ENCODE measurements at regions of chr2 and their contacts with region 1.

Region 1: DNA sequence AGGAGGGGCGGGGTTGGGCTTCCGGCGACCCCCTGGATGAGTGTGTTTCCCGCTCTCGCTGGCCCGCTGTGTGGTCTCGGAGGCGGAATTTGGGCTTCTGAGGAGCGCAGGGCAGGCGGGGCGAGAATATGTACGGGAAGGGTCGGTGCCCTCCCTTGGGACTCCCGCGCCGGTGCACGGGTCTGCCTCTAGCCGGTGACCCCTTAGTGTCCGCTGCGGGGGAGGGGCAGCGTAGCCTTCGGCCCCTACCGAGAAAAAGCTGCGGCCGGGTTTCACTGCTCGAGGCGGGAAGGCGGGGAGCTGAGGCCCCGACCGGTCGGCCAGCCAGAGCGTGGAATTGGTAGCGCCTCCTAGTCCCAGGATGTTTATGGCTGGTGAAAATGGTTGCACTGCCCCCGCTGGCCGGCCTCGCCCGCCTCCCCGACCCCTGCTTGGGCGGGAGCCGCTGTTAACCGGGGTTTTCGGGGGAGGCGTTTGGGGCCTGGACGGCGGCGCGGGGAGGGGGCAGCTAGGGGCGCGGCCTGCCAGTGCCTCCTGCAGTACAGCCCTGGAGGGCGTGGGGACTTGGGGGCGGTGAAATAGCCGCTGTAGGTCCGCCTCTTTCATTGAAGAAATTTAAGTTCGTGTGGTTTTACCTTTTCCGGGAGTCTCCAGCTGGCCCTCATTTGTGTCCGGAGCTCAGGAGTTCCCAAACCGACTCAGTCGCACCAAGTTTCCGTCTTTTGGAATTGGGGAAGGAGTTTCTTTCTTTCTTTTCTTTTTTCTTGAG is at the start of gene UGP2:
- DNase-seq: peak; percentile 70 to 92 (median 82)
- ATAC-seq: peak; percentile 64
- H3K4me3 ChIP-seq: peak within 1 kb of the TSS; percentile 99
- H3K4me3 Mint-ChIP-seq: peak within 1 kb of the TSS; percentile 99
- H3K27ac ChIP-seq: peak within 1 kb of the TSS; percentile 87
- H3K27ac Mint-ChIP-seq: peak within 1 kb of the TSS; percentile 97
- H3K4me1 ChIP-seq: peaks cover 29% of the 10 kb centered on the region
- H3K4me1 Mint-ChIP-seq: peaks cover 47% of the 10 kb centered on the region
- H3K27me3 ChIP-seq: no peaks in the 10 kb centered on the region
- H3K27me3 Mint-ChIP-seq: no peaks in the 10 kb centered on the region
- CTCF ChIP-seq: peak; percentile 15
- total RNA-seq, gene UGP2: 47.1 to 53.2 TPM

Region 2: GRCh38 chr2:63698825-63699548 is 142.5 kb before region 1 on chr2:
- CTCF ChIA-PET with region 1: no interaction called
- POLR2A ChIA-PET with region 1: no interaction called
- intact Hi-C with region 1: loop called in 1 of 2 experiments (anchors 1 kb)
- DNase-seq: peak in 6 of 14 experiments; percentile 4 to 61 (median 29)
- ATAC-seq: peak; percentile 70
- H3K4me3 ChIP-seq: no peak overlapping the region
- H3K4me3 Mint-ChIP-seq: no peak overlapping the region
- H3K27ac ChIP-seq: no peak overlapping the region
- H3K27ac Mint-ChIP-seq: no peak overlapping the region
- H3K4me1 ChIP-seq: no peaks in the 10 kb centered on the region
- H3K4me1 Mint-ChIP-seq: no peaks in the 10 kb centered on the region
- H3K27me3 ChIP-seq: no peaks in the 10 kb centered on the region
- H3K27me3 Mint-ChIP-seq: no peaks in the 10 kb centered on the region
- CTCF ChIP-seq: peak; percentile 44

Region 3: DNA sequence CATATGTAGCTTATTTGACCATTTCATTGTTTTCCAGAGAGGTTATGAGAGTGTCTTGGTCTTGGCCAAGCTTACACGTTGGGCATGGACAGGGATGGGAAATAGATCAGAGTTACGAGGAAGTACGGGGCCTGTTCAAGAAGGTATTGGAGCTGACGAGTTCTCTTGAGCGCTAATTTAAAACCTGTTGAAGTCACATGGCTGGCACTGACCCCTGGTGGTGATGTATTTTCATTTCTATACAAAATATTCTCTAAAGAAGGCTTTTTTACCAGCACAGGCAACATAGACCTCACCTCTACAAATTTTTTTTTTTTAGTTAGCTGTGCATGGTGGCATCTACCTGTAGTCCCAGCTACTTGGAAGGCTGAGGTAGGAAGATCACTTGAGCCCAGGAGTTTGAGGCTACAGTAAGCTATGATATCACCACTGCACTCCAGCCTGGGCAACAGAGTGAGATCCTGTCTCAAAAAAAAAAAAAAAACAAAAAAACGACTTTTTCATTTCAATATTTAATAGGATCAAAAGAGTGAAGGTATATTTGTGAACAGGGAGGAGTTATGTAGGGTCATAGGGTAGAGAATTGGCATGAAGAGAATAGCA is 19.9 kb after region 1 on chr2:
- CTCF ChIA-PET with region 1: interaction called, 50 read pairs
- POLR2A ChIA-PET with region 1: interaction called, 93 read pairs
- intact Hi-C with region 1: loop called (anchors 1 to 2 kb)
- DNase-seq: peak; percentile 43 to 86 (median 56)
- ATAC-seq: peak; percentile 68
- H3K4me3 ChIP-seq: no peak overlapping the region
- H3K4me3 Mint-ChIP-seq: peak overlapping the region; percentile 17
- H3K27ac ChIP-seq: no peak overlapping the region
- H3K27ac Mint-ChIP-seq: peak overlapping the region; percentile 24
- H3K4me1 ChIP-seq: peaks cover 11% of the 10 kb centered on the region
- H3K4me1 Mint-ChIP-seq: peaks cover 39% of the 10 kb centered on the region
- H3K27me3 ChIP-seq: no peaks in the 10 kb centered on the region
- H3K27me3 Mint-ChIP-seq: no peaks in the 10 kb centered on the region
- CTCF ChIP-seq: peak; percentile 70

Region 4: DNA sequence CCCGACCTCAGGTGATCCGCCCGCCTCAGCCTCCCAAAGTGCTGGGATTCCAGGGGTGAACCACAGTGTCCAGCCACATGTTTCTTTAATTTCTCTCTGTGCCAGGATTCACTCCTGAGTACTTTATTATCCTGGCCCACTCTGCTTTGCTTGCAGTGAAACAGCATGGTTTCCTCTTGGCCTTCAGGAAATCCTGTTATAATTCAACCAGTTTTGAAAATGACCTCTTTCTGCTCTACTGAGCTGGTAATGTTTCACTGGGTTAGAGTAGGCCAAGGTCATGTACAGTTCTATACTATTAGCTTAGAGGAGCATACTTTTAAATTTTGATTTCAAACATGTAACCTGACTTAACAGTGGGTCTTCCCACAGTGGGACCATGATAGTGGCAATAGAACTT is 393.3 kb after region 1 on chr2:
- CTCF ChIA-PET with region 1: no interaction called
- POLR2A ChIA-PET with region 1: no interaction called
- intact Hi-C with region 1: no loop called
- DNase-seq: no peak
- ATAC-seq: no peak
- H3K4me3 ChIP-seq: no peak overlapping the region
- H3K4me3 Mint-ChIP-seq: no peak overlapping the region
- H3K27ac ChIP-seq: no peak overlapping the region
- H3K27ac Mint-ChIP-seq: no peak overlapping the region
- H3K4me1 ChIP-seq: no peaks in the 10 kb centered on the region
- H3K4me1 Mint-ChIP-seq: no peaks in the 10 kb centered on the region
- H3K27me3 ChIP-seq: no peaks in the 10 kb centered on the region
- H3K27me3 Mint-ChIP-seq: no peaks in the 10 kb centered on the region
- CTCF ChIP-seq: no peak

Region 5: DNA sequence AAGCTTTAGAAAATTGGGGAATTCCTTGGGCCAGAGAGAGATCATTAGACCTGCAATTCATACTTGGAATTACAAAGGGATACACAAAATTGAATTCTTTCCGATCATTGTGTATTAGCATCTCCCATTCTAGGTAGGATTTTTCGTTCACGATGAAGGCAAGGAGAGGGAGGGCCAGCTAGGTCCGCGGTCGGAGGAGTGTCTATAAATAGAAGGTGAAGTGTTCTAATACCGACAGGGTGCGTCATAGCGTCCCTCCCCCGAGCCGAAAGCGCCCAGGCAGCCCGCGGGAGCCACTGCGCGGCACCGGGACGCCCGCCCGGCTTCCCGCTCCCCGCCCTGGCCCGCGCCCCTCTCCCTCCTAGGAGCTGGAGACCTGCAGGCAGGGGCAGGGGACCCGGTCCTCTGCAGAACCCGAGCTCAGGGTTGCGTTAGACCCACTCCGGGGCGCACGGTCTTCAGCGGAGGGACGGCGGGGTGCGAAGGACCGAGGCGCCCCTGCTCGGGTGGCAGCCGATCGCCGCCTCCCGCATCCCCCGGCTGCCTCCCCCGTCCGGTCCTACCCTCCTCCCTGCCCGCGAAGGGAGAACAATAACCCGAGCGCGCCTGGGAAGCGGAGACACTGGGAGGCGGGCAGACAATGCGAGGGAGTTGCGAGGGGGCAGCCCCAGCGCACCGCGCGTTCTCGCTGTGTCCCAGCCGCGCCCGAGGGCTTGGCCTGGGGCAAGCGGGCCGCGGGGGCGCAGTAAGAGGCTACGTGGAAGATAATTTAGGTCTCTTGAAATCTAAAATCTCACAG is 926.4 kb after region 1 on chr2:
- CTCF ChIA-PET with region 1: no interaction called
- POLR2A ChIA-PET with region 1: no interaction called
- intact Hi-C with region 1: loop called in 1 of 2 experiments (anchors 5 kb)
- DNase-seq: peak; percentile 36 to 93 (median 62)
- ATAC-seq: peak; percentile 74
- H3K4me3 ChIP-seq: peak overlapping the region; percentile 63
- H3K4me3 Mint-ChIP-seq: peak overlapping the region; percentile 93
- H3K27ac ChIP-seq: peak overlapping the region; percentile 82 to 85
- H3K27ac Mint-ChIP-seq: peak overlapping the region; percentile 81
- H3K4me1 ChIP-seq: peaks cover 6% of the 10 kb centered on the region
- H3K4me1 Mint-ChIP-seq: peaks cover 22% of the 10 kb centered on the region
- H3K27me3 ChIP-seq: no peaks in the 10 kb centered on the region
- H3K27me3 Mint-ChIP-seq: no peaks in the 10 kb centered on the region
- CTCF ChIP-seq: peak; percentile 37

Region 6: DNA sequence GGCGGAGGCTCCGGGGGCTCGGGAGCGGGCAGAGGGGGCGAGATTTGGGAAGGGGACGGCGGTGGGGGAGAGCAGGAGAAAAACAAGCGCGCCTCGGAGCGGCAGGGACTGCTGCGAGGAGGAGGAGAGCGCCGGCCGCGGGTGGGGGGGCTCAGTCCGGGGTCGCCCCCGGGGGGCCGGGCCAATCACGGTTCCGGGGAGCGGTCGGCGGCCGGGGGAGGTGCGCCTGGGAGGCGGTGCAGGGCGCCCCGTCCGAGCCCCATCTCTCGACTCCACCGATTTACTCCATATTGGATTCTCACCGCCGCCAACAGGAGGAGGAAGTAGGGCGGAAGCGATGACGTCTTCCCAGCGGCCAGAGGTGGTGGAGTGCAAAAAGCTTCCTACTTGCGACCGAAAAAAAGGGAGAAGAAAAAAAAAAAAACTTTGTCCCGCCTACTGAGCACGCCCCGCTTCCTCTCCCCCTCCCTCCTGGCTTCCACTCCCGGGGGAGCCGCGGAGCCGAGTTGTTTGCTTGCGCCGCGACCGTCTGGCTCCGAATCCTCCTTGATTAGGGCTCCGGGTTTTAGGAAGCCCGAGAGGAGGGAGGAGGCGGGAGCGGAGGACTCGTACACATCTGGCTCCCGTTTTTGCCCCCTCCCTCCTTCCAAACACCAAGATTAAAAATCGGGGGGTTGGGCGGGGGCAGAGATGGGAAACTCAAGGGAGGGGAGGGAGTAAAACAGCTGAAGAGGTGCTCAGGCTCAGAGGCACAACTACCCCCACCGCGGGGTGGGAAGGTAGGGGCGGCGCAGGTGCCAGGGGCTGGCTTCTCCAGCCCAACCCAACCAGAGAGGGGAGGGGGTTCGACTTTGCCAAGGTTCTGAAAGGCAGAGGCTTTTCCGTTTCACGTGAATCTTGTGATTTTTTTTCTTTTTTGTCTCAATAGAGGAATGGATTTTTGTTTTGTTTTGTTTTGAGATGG is 1591.1 kb after region 1 on chr2 and contains the start of gene SPRED2:
- CTCF ChIA-PET with region 1: no interaction called
- POLR2A ChIA-PET with region 1: no interaction called
- intact Hi-C with region 1: loop called in 1 of 2 experiments (anchors 10 kb)
- DNase-seq: peak in 13 of 14 experiments; percentile 36 to 89 (median 60)
- ATAC-seq: peak; percentile 47
- H3K4me3 ChIP-seq: peak within 1 kb of the TSS; percentile 75
- H3K4me3 Mint-ChIP-seq: peak within 1 kb of the TSS; percentile 94
- H3K27ac ChIP-seq: no peak within 1 kb of the TSS
- H3K27ac Mint-ChIP-seq: peak within 1 kb of the TSS; percentile 42
- H3K4me1 ChIP-seq: peaks cover 49% of the 10 kb centered on the region
- H3K4me1 Mint-ChIP-seq: peaks cover 23% of the 10 kb centered on the region
- H3K27me3 ChIP-seq: peaks cover 29 to 34% of the 10 kb centered on the region in 2 experiments
- H3K27me3 Mint-ChIP-seq: peaks cover 57% of the 10 kb centered on the region
- CTCF ChIP-seq: no peak
- total RNA-seq, gene SPRED2: 2.5 to 2.8 TPM

Measured in CD4-positive, alpha-beta T cell (primary cell).